ENCODE measurements at regions of chr1 and their contacts with region 1.

Region 1: DNA sequence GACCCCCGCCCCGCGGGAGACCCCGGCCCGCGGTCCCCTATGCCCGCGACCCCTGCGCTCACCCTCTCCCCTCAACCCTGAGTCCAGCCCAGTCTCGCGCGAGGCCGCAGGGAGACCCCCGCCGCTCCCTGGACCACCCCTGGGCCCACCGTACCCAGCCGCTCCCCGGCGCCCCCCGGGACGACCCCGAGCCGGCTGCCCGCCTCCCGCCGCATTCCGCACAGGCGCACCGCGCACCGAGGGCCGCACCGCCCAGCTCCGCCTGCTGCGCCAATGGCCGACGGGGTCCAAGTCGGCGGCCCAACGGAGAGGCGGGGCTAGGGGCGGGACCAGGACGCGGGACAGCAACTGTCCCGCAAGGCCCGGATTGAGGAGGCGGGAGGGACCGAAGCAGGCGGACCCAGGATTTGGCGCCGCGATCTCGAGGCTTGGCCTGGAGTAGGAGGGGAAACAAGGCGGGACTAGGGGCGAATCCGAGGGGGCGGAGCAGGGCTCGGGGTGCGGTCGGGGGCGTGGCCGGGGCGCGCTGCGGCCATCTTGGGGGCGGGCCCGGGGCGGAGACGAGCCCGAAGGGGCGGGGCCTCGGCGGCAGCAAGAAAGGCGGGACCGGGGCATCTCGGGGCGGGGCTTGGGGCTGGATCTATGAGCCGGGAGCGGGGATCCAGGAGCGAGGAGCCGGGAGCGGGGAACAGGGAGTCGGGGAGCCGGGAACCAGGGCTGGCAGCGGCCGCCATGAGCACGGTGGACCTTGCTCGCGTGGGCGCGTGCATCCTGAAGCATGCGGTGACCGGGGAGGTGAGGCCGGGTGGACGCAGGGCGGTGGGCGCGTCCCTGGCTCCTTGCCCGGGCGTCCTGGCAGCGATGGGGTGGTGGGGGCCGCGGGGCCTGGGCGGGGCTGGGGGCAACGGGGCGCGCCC is at the start of gene PRXL2B:
- DNase-seq: peak; percentile 99
- ATAC-seq: peak; percentile 93
- total RNA-seq, gene PRXL2B: 10.8 to 14.1 TPM

Region 2: DNA sequence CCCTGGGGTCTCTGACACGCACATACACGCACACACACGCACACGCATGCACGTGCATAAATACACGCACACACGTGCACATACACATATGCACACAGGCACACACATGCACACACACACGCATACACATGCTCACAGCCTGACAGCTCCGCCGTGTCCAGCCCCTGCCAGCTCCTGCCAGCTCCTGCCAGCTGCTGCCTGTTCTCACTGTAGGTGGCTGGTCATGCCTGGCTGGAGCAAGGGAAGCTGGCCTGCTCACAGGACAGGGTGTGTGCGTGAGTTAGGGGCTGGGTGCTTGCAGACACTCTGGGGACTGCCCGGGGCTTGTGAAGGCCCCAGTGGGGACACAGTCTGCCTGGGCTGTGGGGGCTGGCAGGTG is 105.4 kb before region 1 on chr1:
- intact Hi-C with region 1: no loop called
- DNase-seq: no peak
- ATAC-seq: peak; percentile 18 to 25

Region 3: GRCh38 chr1:2575801-2576663 is 10.4 kb before region 1 on chr1:
- intact Hi-C with region 1: no loop called
- DNase-seq: no peak
- ATAC-seq: no peak

Region 4: GRCh38 chr1:2636733-2637132 is 50.3 kb after region 1 on chr1:
- intact Hi-C with region 1: loop called in 1 of 2 experiments (anchors 5 kb)
- DNase-seq: no peak
- ATAC-seq: no peak

Measured in left cardiac atrium (tissue), 4 donors.